Ascending aorta (tissue), 2 donors: ENCODE measurements at regions of chr12 and their contacts with region 1.

Region 1: GRCh38 chr12:4604684-4605193 is 42.7 kb downstream of the DYRK4 start:
- DNase-seq: peak; percentile 34 to 92
- H3K4me3 ChIP-seq: peak overlapping the region; percentile 56 to 78
- H3K27ac ChIP-seq: peak overlapping the region; percentile 46 to 49
- H3K4me1 ChIP-seq: no peaks in the 10 kb centered on the region
- H3K27me3 ChIP-seq: no peaks in the 10 kb centered on the region
- CTCF ChIP-seq: peak; percentile 72 to 100 (median 99)

Region 2: DNA sequence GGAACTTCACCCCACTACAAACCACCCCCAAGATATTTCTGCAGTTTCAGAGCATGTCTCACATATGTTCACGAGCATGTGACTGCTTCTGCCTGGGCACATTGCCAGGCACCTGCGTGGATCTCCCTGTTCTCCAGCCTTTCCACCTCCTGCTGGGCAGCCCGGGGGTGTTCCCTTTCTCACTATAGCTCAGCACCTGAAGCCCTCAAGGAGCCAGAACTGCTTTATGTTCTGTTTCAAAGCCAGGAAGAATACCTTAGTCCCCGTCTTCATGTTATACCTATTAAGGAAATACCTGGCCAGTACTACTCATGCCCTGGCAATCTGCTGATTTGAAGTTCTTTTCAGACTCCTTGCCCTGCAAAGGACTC is 154.9 kb before region 1 on chr12:
- intact Hi-C with region 1: no loop called
- DNase-seq: no peak
- H3K4me3 ChIP-seq: no peak overlapping the region
- H3K27ac ChIP-seq: no peak overlapping the region
- H3K4me1 ChIP-seq: no peaks in the 10 kb centered on the region
- H3K27me3 ChIP-seq: no peaks in the 10 kb centered on the region
- CTCF ChIP-seq: no peak

Region 3: DNA sequence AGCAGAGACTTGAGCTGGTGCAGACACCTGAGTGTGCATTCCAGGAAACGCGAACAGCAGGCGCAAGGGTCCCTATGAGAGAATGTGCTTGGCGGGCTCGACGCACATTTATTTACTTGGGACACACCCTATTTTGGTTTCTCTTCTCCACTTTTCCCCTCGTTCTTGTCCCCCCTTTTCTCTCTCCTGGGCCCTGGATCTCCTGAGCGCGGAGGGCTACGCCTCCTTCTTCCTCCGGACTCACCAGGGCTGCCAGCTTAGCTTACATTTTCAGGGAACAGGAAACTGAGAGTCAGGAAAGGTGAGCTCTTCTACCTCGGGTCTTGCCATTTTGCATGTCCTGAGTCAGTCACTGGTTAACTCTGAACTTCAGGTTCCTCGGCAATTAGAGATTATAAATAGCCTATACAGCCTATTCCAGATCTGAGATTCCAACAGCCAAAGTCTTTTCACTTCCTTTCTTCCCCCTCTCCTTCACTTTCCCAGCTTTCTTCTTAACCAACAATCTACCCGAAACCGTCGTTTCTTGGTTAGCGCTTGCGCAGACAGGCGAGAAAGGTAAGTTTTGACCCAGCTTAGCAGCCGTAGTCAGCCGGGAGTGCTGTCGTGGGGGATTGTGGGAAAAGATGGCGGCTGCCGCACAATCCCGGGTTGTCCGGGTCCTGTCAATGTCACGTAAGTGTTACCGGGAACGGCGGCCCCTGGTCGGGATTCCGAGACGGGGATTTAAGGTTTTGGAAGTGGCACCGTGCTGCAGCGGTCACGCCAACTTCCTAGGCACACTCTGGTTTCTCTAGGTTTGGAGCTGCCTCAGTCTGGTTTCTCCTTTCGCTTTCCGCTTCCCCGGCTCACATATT is 44.0 kb after region 1 on chr12 and contains the starts of genes AKAP3 and NDUFA9:
- intact Hi-C with region 1: loop called (anchors 2 kb)
- DNase-seq: peak; percentile 10 to 87
- H3K4me3 ChIP-seq: peak within 1 kb of the TSS; percentile 72 to 87
- H3K27ac ChIP-seq: peak within 1 kb of the TSS; percentile 86
- H3K4me1 ChIP-seq: peaks cover 8 to 15% of the 10 kb centered on the region in 2 donors
- H3K27me3 ChIP-seq: no peaks in the 10 kb centered on the region
- CTCF ChIP-seq: no peak
- total RNA-seq, gene AKAP3: 2.8 TPM
- total RNA-seq, gene NDUFA9: 1.5 TPM

Region 4: DNA sequence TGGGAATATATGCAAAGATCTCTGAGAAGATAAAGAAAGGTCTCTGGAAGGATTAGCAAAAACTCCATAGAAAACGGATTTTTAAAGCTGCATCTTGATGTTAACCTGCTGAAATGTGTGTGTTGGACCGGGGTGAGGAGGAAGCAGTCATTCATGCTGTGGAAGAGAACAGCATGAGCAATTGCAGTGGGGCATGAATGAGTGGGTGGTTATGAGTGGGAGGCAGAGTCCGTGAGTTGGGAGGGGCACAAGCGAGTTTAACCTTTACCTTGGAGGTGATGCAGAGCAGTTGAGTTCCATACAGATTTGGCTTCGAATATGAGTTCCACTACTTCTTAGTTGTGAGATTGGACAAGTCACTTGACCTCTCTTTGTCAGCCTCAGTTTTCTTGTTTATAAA is 86.0 kb after region 1 on chr12:
- intact Hi-C with region 1: no loop called
- DNase-seq: no peak
- H3K4me3 ChIP-seq: no peak overlapping the region
- H3K27ac ChIP-seq: no peak overlapping the region
- H3K4me1 ChIP-seq: no peaks in the 10 kb centered on the region
- H3K27me3 ChIP-seq: no peaks in the 10 kb centered on the region
- CTCF ChIP-seq: no peak

Region 5: DNA sequence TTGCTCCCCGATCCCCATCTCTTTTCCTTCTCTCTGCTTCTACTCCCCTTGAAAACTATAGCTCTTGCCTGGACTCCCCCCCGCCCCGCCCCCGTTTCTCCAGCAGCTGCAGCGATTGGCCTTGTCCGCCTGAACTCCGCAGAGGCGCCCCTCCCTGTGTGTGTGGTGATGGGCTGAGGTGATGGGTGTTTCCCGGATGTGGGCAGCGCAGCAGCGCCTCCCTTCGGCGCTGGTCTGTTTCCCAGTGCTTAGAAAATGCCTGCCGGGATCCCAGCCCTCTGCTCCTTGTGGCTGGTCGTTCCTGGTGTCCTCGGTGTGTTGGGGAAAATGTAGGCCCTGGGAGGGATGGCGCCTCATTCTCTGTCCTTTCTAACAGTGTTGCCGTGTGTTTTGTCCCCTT is 158.8 kb after region 1 on chr12:
- intact Hi-C with region 1: loop called (anchors 10 kb)
- DNase-seq: no peak
- H3K4me3 ChIP-seq: no peak overlapping the region
- H3K27ac ChIP-seq: no peak overlapping the region
- H3K4me1 ChIP-seq: peaks cover 0 to 3% of the 10 kb centered on the region in 2 donors
- H3K27me3 ChIP-seq: no peaks in the 10 kb centered on the region
- CTCF ChIP-seq: peak in 2 of 3 experiments; percentile 14 to 16